Transverse colon (tissue), 4 donors: ENCODE measurements at regions of chr14 and their contacts with region 1.

Region 1: DNA sequence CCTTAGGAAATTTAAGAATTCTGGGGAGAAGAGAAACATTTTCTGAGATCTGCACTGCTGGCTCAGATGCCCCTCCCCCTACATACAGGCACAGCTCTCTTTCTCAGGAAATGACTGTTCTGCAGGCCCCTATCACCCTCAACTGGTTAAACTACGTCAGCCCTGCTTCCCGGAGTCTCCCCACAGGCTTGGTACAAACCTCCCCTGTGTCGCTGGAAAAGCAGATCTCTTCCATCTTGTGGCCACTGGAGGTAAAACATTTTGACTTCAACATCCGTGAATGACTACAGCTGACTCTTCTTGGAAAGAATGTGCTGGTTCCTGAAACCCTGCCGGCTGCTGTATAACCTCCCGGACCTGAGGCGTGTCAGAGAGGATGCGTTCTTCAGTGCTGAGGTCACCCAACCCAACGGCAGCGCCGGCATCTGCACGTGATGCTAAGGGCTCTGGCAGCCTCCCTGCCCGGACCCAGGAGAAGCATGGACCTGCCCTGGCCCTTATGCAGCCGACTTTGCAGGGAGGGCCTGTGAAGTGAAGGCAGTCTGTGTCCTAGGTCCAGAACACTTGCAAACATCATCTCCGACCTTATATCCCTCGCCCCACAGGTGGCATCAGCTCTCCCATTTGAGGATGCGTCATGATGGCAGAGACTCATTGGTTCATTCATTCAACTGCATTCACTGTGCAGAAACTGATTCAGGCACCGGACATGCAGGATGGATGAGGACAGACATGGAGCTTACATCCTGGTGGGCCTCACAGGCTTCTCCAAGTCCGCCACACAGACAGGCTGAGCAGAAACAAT is 129.3 kb downstream of the GCH1 start:
- DNase-seq: peak; percentile 80
- H3K4me3 ChIP-seq: no peak overlapping the region
- H3K27ac ChIP-seq: peak overlapping the region; percentile 73 to 91 (median 78)
- H3K4me1 ChIP-seq: peaks cover 7 to 30% (median 24%) of the 10 kb centered on the region in 4 donors
- H3K27me3 ChIP-seq: no peaks in the 10 kb centered on the region
- CTCF ChIP-seq: peak; percentile 51 to 85 (median 58)
- EP300 ChIP-seq: peak; percentile 86
- POLR2A ChIP-seq: no peak

Region 2: GRCh38 chr14:54555651-54556050 is 217.7 kb before region 1 on chr14:
- in situ Hi-C with region 1: loop called in 1 of 4 experiments (anchors 10 kb)
- intact Hi-C with region 1: no loop called
- DNase-seq: no peak
- H3K4me3 ChIP-seq: no peak overlapping the region
- H3K27ac ChIP-seq: no peak overlapping the region
- H3K4me1 ChIP-seq: no peaks in the 10 kb centered on the region
- H3K27me3 ChIP-seq: no peaks in the 10 kb centered on the region
- CTCF ChIP-seq: no peak
- EP300 ChIP-seq: no peak
- POLR2A ChIP-seq: no peak

Region 3: DNA sequence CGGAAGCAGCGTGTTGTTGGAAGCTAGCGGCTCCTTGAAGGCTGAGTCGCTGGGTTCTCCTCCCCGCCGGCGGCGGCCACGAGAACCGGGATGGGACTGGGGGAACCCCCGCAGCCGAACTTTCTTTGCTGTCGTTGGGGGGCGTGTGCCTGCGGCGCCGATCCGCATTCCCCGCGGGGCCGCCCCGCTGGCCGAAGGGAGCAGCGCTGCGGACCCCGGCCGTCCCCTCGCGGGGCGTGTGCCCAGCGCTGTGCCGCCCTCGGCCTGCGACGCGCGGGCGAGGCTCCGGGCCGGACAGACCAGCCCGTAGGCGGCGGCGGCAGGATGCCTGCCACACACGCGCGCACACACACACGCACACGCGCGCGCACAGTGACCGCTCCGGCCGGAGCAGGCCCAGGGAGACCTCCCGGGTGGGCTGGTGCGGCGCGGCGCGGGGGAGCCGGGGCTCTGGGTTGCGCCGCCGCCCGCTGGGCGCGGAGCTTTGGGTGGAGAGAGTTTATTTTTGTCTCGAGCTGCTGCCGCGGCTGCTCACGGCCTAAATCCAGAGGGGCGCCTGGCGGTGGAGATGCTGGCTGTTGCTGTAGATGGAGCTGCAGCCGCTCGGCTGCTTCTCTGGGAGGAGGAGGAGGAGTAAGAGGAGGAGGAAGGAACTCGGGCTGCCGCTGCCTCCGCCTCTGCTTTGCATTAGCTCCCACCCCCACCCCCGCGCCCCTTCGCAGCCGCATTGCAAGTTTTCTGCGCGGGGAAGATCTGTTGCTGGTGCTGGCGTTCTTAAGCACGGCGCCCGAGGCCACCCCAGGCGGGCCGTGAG is 206.8 kb before region 1 on chr14 and contains the start of gene SAMD4A:
- in situ Hi-C with region 1: loop called in 3 of 4 experiments (anchors 10 kb)
- intact Hi-C with region 1: loop called (anchors 1 kb)
- DNase-seq: peak; percentile 75
- H3K4me3 ChIP-seq: peak within 1 kb of the TSS; percentile 51 to 77 (median 70)
- H3K27ac ChIP-seq: peak within 1 kb of the TSS; percentile 97 to 99 (median 98)
- H3K4me1 ChIP-seq: peaks cover 0 to 35% (median 28%) of the 10 kb centered on the region in 4 donors
- H3K27me3 ChIP-seq: no peaks in the 10 kb centered on the region
- CTCF ChIP-seq: peak in 2 of 5 experiments; percentile 18 to 32
- EP300 ChIP-seq: no peak
- POLR2A ChIP-seq: peak; percentile 48
- total RNA-seq, gene SAMD4A: 15.3 to 40.2 (median 22.3) TPM

Region 4: GRCh38 chr14:54572316-54572715 is 201.1 kb before region 1 on chr14:
- in situ Hi-C with region 1: loop called in 3 of 4 experiments (anchors 10 kb)
- intact Hi-C with region 1: no loop called
- DNase-seq: no peak
- H3K4me3 ChIP-seq: no peak overlapping the region
- H3K27ac ChIP-seq: no peak overlapping the region
- H3K4me1 ChIP-seq: peaks cover 0 to 34% (median 19%) of the 10 kb centered on the region in 4 donors
- H3K27me3 ChIP-seq: no peaks in the 10 kb centered on the region
- CTCF ChIP-seq: peak; percentile 20 to 41 (median 27)
- EP300 ChIP-seq: no peak
- POLR2A ChIP-seq: no peak

Region 5: DNA sequence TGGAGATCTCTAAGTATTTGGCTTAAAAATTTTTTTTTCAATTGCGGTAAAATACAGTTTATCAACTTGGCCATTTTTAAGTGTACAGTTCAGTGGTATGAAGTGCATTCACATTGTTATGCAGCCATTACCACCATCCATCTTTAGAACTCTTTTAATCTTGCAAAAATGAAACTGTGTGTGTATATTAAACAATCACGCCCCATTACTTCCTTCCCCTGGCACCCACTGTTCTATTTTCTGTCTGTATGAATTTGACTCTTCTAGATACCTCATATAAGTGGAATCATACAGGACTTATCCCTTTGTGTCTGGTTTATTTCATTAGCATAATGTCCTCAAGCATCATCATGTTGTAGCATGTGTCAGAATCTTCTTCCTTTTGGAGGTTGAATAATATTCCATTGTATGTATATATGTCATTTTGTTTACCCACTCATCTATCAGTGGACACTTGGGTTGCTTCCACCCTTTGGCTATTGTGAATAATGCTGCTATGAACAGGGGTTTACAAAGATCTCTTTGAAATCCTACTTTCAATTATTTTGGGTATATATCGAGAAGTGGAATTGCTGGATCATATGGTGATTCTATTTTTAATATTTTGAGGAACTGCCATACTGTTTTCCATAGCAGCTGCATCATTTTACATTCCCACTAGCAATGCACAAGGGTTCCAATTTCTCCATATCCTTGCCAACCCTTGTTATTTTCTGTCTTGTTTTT is 143.6 kb before region 1 on chr14:
- in situ Hi-C with region 1: no loop called
- intact Hi-C with region 1: no loop called
- DNase-seq: no peak
- H3K4me3 ChIP-seq: no peak overlapping the region
- H3K27ac ChIP-seq: no peak overlapping the region
- H3K4me1 ChIP-seq: peaks cover 10 to 46% (median 18%) of the 10 kb centered on the region in 4 donors
- H3K27me3 ChIP-seq: no peaks in the 10 kb centered on the region
- CTCF ChIP-seq: no peak
- EP300 ChIP-seq: no peak
- POLR2A ChIP-seq: no peak

Region 6: DNA sequence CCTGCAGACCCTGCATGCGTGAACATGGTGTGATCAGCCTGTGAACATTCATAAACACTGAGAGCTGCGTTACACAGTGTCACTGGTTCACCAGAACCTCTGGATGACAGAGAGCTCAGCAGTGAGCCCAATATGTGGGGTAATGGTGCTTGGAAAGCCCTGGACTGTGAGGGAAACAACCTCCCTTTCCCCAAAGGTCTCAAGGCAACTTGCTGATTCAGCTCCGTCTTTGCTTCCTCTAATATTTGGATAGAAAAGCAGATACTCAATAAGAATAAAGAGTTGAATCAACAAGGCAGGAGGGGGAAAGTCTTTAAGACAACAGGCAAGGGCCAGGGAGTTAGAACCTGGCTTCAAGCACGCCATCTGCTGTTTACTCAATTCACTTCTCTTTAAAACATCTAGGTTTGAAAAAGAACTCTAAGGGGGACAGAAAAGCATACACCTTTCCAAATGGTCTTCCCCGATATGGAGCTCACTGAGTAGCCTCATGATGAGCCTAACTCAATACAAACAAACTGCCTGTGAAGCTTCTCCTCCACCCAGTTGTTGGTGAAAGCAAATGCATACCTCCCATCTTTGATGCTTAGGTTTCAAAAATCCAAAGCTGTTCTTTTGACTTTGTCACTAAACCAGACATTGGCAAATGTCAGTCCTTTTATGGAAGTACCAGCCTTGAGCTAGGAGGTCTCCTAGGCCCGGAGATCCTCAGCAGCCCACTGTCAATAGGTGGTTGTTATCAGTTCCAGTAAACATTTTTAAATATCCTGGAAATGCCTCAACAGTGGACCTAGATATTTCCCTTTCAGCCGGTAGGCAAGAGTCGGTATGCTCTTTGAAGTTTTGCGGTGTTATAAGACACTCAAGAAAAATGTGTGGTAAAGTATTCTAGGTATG is 130.3 kb before region 1 on chr14:
- in situ Hi-C with region 1: loop called in 1 of 4 experiments (anchors 10 kb)
- intact Hi-C with region 1: no loop called
- DNase-seq: no peak
- H3K4me3 ChIP-seq: no peak overlapping the region
- H3K27ac ChIP-seq: peak overlapping the region; percentile 8 to 40 (median 36)
- H3K4me1 ChIP-seq: peaks cover 0 to 29% (median under 1%) of the 10 kb centered on the region in 4 donors
- H3K27me3 ChIP-seq: no peaks in the 10 kb centered on the region
- CTCF ChIP-seq: no peak
- EP300 ChIP-seq: no peak
- POLR2A ChIP-seq: no peak

Region 7: GRCh38 chr14:54727929-54728328 is 45.4 kb before region 1 on chr14:
- in situ Hi-C with region 1: no loop called
- intact Hi-C with region 1: loop called (anchors 5 kb)
- DNase-seq: no peak
- H3K4me3 ChIP-seq: no peak overlapping the region
- H3K27ac ChIP-seq: peak overlapping the region; percentile 0 to 74 (median 48)
- H3K4me1 ChIP-seq: peaks cover 0 to 17% (median 6%) of the 10 kb centered on the region in 4 donors
- H3K27me3 ChIP-seq: no peaks in the 10 kb centered on the region
- CTCF ChIP-seq: no peak
- EP300 ChIP-seq: peak; percentile 63
- POLR2A ChIP-seq: no peak